CD8-positive, alpha-beta T cell (primary cell): ENCODE measurements at regions of chr2 and their contacts with region 1.

Region 1: DNA sequence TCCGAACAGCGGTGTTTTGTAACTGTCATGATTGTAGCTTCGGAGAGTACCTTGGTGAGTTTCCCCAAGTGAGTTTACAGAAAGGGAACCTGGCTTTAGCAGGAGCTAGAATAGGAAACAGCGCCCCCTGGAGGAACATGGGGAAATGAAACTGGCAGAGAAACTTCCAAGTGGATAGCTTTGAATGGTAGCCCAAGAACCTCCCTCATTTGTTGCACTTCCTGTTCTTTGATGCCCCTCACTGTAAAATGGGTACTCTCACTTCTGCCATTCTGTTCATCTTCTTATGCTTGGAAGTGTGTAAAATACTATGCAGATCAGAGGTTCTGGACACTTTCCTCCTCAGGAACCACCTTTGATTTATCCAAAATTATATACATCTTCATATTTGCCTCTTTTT is 36.2 kb downstream of the CHST10 start:
- DNase-seq: peak; percentile 18 to 78 (median 68)
- ATAC-seq: peak; percentile 31
- H3K4me3 ChIP-seq: no peak overlapping the region
- H3K4me3 Mint-ChIP-seq: no peak overlapping the region
- H3K27ac ChIP-seq: no peak overlapping the region
- H3K27ac Mint-ChIP-seq: no peak overlapping the region
- H3K4me1 ChIP-seq: no peaks in the 10 kb centered on the region
- H3K4me1 Mint-ChIP-seq: no peaks in the 10 kb centered on the region
- H3K27me3 ChIP-seq: no peaks in the 10 kb centered on the region
- H3K27me3 Mint-ChIP-seq: peaks cover 4% of the 10 kb centered on the region
- CTCF ChIP-seq: peak; percentile 81

Region 2: GRCh38 chr2:100262555-100263320 is 118.5 kb before region 1 on chr2:
- CTCF ChIA-PET with region 1: interaction called, 61 read pairs
- POLR2A ChIA-PET with region 1: no interaction called
- intact Hi-C with region 1: loop called (anchors 1 kb)
- DNase-seq: peak; percentile 16 to 73 (median 54)
- ATAC-seq: peak; percentile 70
- H3K4me3 ChIP-seq: no peak overlapping the region
- H3K4me3 Mint-ChIP-seq: no peak overlapping the region
- H3K27ac ChIP-seq: no peak overlapping the region
- H3K27ac Mint-ChIP-seq: no peak overlapping the region
- H3K4me1 ChIP-seq: no peaks in the 10 kb centered on the region
- H3K4me1 Mint-ChIP-seq: peaks cover 2% of the 10 kb centered on the region
- H3K27me3 ChIP-seq: no peaks in the 10 kb centered on the region
- H3K27me3 Mint-ChIP-seq: no peaks in the 10 kb centered on the region
- CTCF ChIP-seq: peak; percentile 91

Region 3: GRCh38 chr2:100391735-100392515 is 10.7 kb after region 1 on chr2:
- CTCF ChIA-PET with region 1: interaction called, 25 read pairs
- POLR2A ChIA-PET with region 1: no interaction called
- intact Hi-C with region 1: no loop called
- DNase-seq: peak in 1 of 9 experiments; percentile 32
- ATAC-seq: no peak
- H3K4me3 ChIP-seq: no peak overlapping the region
- H3K4me3 Mint-ChIP-seq: no peak overlapping the region
- H3K27ac ChIP-seq: no peak overlapping the region
- H3K27ac Mint-ChIP-seq: no peak overlapping the region
- H3K4me1 ChIP-seq: no peaks in the 10 kb centered on the region
- H3K4me1 Mint-ChIP-seq: no peaks in the 10 kb centered on the region
- H3K27me3 ChIP-seq: no peaks in the 10 kb centered on the region
- H3K27me3 Mint-ChIP-seq: no peaks in the 10 kb centered on the region
- CTCF ChIP-seq: no peak